Dendritic cell treated with granulocyte-macrophage colony-stimulating factor and Interleukin-4, amounts not matched to agents 40 ng/mL and 50 ng/mL, for 4 days (primary cell): ENCODE measurements at regions of chr2 and their contacts with region 1.

Region 1: DNA sequence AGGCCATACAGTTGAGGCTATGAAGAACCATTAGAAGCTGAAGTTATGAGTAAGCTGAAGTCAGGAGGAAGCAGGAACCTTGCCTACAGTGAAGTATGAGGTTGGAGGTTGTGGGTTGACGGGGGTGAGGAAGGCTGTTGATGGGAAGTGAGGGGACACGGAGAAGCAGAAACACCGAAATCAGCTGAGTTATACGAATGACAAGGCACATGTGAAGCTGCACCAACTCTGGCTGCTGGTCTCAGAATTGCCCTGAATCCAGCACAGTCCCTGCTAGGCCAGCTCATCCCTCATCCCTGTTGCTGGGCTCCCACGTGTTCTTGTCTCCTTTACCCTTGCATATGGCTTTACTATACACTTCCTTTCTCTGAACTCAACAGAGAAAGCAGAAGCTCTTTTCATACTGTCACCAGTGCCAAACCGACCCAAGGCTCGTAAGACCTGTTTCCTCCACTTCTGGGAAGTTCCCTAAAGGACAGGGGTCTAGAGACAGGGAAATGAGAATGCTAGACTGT is 9.2 kb upstream of the TMEM247 start:
- H3K4me3 Mint-ChIP-seq: no peak overlapping the region
- H3K27ac Mint-ChIP-seq: peak overlapping the region; percentile 83
- H3K4me1 Mint-ChIP-seq: peaks cover 37% of the 10 kb centered on the region
- H3K27me3 Mint-ChIP-seq: no peaks in the 10 kb centered on the region

Region 2: GRCh38 chr2:46521215-46521683 is 51.1 kb after region 1 on chr2:
- intact Hi-C with region 1: loop called (anchors 1 kb)
- H3K4me3 Mint-ChIP-seq: no peak overlapping the region
- H3K27ac Mint-ChIP-seq: peak overlapping the region; percentile 86
- H3K4me1 Mint-ChIP-seq: peaks cover 62% of the 10 kb centered on the region
- H3K27me3 Mint-ChIP-seq: no peaks in the 10 kb centered on the region

Region 3: GRCh38 chr2:46547223-46548102 is 77.3 kb after region 1 on chr2:
- intact Hi-C with region 1: loop called (anchors 2 kb)
- H3K4me3 Mint-ChIP-seq: peak overlapping the region; percentile 73
- H3K27ac Mint-ChIP-seq: peak overlapping the region; percentile 96
- H3K4me1 Mint-ChIP-seq: peaks cover 86% of the 10 kb centered on the region
- H3K27me3 Mint-ChIP-seq: no peaks in the 10 kb centered on the region